Heart left ventricle (tissue), 16 donors: ENCODE measurements at regions of chr4 and their contacts with region 1.

Region 1: GRCh38 chr4:176340871-176341685 is 21.3 kb downstream of the SPCS3 start:
- DNase-seq: peak in 1 of 5 donors; percentile 20
- ATAC-seq: peak in 3 of 4 donors; percentile 42 to 58 (median 55)
- H3K4me3 ChIP-seq: peak overlapping the region in 7 of 12 donors; percentile 27 to 40 (median 33)
- H3K27ac ChIP-seq: no peak overlapping the region
- H3K4me1 ChIP-seq: peaks cover 0 to 16% (median 6%) of the 10 kb centered on the region in 12 donors
- H3K27me3 ChIP-seq: no peaks in the 10 kb centered on the region
- CTCF ChIP-seq: peak; percentile 33 to 79 (median 62)
- POLR2A ChIP-seq: no peak

Region 2: DNA sequence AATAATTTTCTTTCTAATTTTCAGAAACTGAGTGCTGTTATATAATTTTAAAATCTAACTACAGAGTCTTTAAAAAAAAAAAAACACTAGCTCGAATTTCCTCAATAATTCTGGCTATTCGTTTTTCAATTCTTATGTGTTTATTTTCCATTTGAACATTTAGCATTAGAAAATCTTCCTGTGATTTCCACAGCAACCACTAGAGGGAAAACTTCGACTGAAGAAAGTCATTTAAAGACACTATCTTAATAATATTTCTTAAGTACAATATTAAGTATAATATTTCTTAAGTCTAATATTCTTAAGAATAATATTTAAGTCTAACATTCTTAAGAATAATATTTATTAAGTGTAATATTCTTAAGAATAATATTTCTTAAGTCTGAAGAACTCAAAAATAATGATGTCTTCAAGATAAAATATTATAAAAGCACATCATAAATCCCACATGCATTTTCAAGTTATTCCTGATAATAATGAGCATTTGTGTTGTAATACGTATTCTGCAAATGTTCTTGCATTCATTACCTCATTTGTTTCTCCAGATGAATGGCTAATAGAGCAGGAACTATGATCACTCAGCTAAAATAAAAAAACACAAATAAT is 393.9 kb before region 1 on chr4:
- intact Hi-C with region 1: loop called in 7 of 10 experiments (anchors 2 to 10 kb)
- DNase-seq: no peak
- ATAC-seq: no peak
- H3K4me3 ChIP-seq: peak overlapping the region in 5 of 12 donors; percentile 8 to 47 (median 20)
- H3K27ac ChIP-seq: peak overlapping the region in 2 of 12 donors; percentile 12 to 70
- H3K4me1 ChIP-seq: peaks cover 0 to 4% (median 0%) of the 10 kb centered on the region in 12 donors
- H3K27me3 ChIP-seq: no peaks in the 10 kb centered on the region
- CTCF ChIP-seq: peak; percentile 31 to 77 (median 66)
- POLR2A ChIP-seq: no peak

Region 3: GRCh38 chr4:176034499-176034898 is 306.6 kb before region 1 on chr4:
- intact Hi-C with region 1: loop called in 8 of 10 experiments (anchors 5 to 10 kb)
- DNase-seq: no peak
- ATAC-seq: no peak
- H3K4me3 ChIP-seq: no peak overlapping the region
- H3K27ac ChIP-seq: no peak overlapping the region
- H3K4me1 ChIP-seq: no peaks in the 10 kb centered on the region
- H3K27me3 ChIP-seq: no peaks in the 10 kb centered on the region
- CTCF ChIP-seq: peak in 9 of 12 donors; percentile 29 to 56 (median 39)
- POLR2A ChIP-seq: no peak

Region 4: DNA sequence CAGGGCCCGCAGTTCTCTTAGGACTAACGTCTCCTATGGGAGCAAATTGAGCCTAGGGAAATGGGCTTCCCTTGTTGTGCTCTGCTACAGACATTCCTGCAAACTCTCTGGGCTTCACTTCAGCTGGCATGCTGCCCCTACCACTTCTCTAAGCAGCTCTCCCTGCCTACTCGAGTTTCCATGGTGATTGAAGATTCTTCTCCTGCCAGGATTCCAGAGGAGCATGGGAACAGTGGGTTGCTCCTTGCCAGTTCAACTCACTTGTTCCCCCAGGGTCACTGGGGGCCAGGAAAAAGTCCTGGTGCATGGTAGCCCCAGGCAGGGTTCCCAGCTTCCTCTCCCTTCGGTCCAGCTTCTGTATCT is 296.5 kb before region 1 on chr4:
- intact Hi-C with region 1: loop called in 7 of 10 experiments (anchors 5 to 10 kb)
- DNase-seq: no peak
- ATAC-seq: no peak
- H3K4me3 ChIP-seq: no peak overlapping the region
- H3K27ac ChIP-seq: no peak overlapping the region
- H3K4me1 ChIP-seq: no peaks in the 10 kb centered on the region
- H3K27me3 ChIP-seq: peaks cover 0 to 3% (median 0%) of the 10 kb centered on the region in 9 donors
- CTCF ChIP-seq: no peak
- POLR2A ChIP-seq: no peak

Region 5: GRCh38 chr4:176150356-176150682 is 190.8 kb before region 1 on chr4:
- intact Hi-C with region 1: loop called (anchors 1 to 5 kb)
- DNase-seq: no peak
- ATAC-seq: peak in 2 of 4 donors; percentile 60 to 64
- H3K4me3 ChIP-seq: no peak overlapping the region
- H3K27ac ChIP-seq: no peak overlapping the region
- H3K4me1 ChIP-seq: peaks cover 0 to 7% (median 0%) of the 10 kb centered on the region in 12 donors
- H3K27me3 ChIP-seq: no peaks in the 10 kb centered on the region
- CTCF ChIP-seq: peak; percentile 18 to 63 (median 48)
- POLR2A ChIP-seq: no peak

Region 6: DNA sequence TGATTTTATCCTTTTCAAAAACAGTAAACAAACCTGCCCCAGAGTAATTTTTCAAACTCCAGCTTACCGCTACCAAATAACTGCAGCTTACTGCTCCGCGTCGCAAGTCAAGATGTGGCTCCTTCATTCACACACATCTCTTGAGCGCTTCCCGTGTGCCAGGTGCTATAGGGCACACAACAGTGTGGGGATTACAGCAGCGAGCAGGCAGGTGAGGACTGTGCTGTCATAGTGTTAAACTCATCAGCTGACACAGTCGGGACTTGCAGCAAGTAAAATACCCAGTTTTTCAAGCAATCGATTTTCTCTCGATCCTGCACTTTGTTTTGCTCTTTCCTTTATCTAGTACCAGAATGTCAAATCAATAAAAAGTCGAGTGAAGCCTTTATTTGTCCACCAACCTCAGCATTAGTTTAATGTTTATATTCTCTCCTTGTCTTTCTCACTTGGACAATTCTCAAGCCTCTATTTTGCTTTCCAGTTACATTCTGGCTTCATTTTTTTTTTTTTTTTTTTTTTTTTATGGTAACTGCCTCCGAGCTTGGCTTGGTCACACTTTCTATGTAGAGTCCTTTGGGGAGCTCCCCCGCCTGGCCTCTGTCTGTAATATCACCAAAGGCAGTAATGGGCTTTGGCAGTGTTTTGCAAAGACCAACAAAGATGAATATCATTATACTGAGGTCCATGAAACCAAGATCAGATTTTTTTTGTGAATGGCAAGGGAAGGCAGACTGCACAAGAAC is 63.7 kb before region 1 on chr4:
- intact Hi-C with region 1: loop called in 2 of 10 experiments (anchors 5 kb)
- DNase-seq: peak in 4 of 5 donors; percentile 33 to 58 (median 48)
- ATAC-seq: peak in 3 of 4 donors; percentile 83 to 88 (median 83)
- H3K4me3 ChIP-seq: peak overlapping the region in 1 of 12 donors; percentile 3
- H3K27ac ChIP-seq: peak overlapping the region in 1 of 12 donors; percentile 70
- H3K4me1 ChIP-seq: peaks cover 0 to 7% (median 0%) of the 10 kb centered on the region in 12 donors
- H3K27me3 ChIP-seq: no peaks in the 10 kb centered on the region
- CTCF ChIP-seq: peak; percentile 26 to 67 (median 52)
- POLR2A ChIP-seq: no peak